ENCODE measurements at regions of chr15 and their contacts with region 1.

Region 1: GRCh38 chr15:48974882-48975281 is 11.2 kb upstream of the SHC4 start:
- DNase-seq: no peak
- ATAC-seq: no peak

Region 2: GRCh38 chr15:48868536-48868935 is 106.3 kb before region 1 on chr15:
- intact Hi-C with region 1: loop called (anchors 5 kb)
- DNase-seq: no peak
- ATAC-seq: no peak

Region 3: GRCh38 chr15:49046220-49047102 is 71.6 kb after region 1 on chr15 and contains the start of gene SECISBP2L:
- intact Hi-C with region 1: no loop called
- DNase-seq: peak; percentile 96
- ATAC-seq: peak; percentile 98
- total RNA-seq, gene SECISBP2L: 34.2 TPM